ENCODE measurements at regions of chr21 and their contacts with region 1.

Region 1: GRCh38 chr21:41068967-41069642 is 98.9 kb upstream of the BACE2 start:
- DNase-seq: peak; percentile 72
- H3K4me3 ChIP-seq: no peak overlapping the region
- H3K27ac ChIP-seq: no peak overlapping the region
- H3K4me1 ChIP-seq: no peaks in the 10 kb centered on the region
- H3K27me3 ChIP-seq: no peaks in the 10 kb centered on the region
- CTCF ChIP-seq: peak; percentile 81

Region 2: DNA sequence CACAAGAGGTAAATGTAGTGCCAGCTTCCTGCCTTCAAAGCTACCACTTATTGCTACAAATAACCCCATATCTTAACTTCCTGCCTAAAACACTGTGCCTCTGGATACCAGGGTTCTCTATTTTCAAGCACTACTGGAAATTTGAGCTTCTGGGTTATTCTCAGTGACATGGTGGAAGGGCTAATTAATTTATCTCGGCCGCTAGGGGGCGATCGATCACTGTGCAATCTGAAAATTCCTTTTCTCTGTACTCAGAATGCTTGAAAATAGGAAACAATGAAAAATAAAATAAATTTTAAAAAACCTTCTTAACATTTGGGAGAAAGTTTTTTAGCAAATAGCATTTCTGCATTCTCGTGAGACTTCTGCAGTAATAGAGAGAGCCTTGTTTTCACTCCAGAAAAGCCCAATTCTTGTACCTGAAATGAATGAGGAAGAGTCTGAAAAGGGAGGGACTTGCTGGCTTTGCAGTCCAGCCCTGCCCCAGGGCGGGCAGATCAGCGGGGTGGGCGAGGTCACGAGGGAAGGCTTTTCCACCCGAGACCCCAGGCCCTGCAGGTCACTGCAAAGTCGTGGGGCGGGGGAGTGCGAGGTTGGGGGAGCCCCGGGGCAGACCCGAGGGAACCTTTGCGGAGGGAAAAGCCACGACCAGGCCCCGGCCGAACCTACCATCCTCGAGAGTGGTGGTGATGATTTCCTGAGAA is 925.1 kb before region 1 on chr21:
- intact Hi-C with region 1: loop called (anchors 5 kb)
- DNase-seq: peak; percentile 43
- H3K4me3 ChIP-seq: no peak overlapping the region
- H3K27ac ChIP-seq: no peak overlapping the region
- H3K4me1 ChIP-seq: no peaks in the 10 kb centered on the region
- H3K27me3 ChIP-seq: no peaks in the 10 kb centered on the region
- CTCF ChIP-seq: peak; percentile 76

Region 3: GRCh38 chr21:40466893-40467501 is 602.1 kb before region 1 on chr21:
- intact Hi-C with region 1: loop called (anchors 2 kb)
- DNase-seq: no peak
- H3K4me3 ChIP-seq: no peak overlapping the region
- H3K27ac ChIP-seq: no peak overlapping the region
- H3K4me1 ChIP-seq: no peaks in the 10 kb centered on the region
- H3K27me3 ChIP-seq: no peaks in the 10 kb centered on the region
- CTCF ChIP-seq: no peak

Region 4: GRCh38 chr21:40602080-40602479 is 467.0 kb before region 1 on chr21:
- intact Hi-C with region 1: no loop called
- DNase-seq: no peak
- H3K4me3 ChIP-seq: no peak overlapping the region
- H3K27ac ChIP-seq: no peak overlapping the region
- H3K4me1 ChIP-seq: no peaks in the 10 kb centered on the region
- H3K27me3 ChIP-seq: no peaks in the 10 kb centered on the region
- CTCF ChIP-seq: no peak

Region 5: DNA sequence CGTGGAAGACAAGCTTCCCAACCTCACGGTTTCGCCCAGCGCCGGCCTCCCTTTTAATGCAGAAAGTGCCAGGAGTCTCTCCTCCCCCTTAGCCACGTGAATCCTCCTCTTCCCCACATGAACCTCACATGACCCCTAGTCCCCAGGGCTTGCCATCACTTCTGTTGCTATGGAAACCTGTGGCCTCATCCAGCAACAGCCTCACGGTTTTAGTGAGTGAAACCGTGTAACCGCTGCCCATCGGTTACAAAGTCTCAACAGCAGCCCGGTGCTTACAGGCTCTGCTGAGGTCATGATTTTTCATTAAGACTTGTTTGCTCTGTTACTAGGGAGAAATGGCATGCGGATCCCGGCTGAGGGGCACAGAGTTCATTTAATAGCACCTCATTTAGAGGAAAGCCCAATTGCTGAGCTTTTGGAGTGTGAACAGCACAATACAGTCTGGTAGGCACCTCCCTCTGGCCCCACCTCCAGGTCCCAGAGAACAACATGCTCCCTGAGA is 44.3 kb before region 1 on chr21:
- intact Hi-C with region 1: no loop called
- DNase-seq: no peak
- H3K4me3 ChIP-seq: no peak overlapping the region
- H3K27ac ChIP-seq: no peak overlapping the region
- H3K4me1 ChIP-seq: no peaks in the 10 kb centered on the region
- H3K27me3 ChIP-seq: no peaks in the 10 kb centered on the region
- CTCF ChIP-seq: no peak

Region 6: GRCh38 chr21:41170859-41171555 is 101.9 kb after region 1 on chr21:
- intact Hi-C with region 1: no loop called
- DNase-seq: no peak
- H3K4me3 ChIP-seq: no peak overlapping the region
- H3K27ac ChIP-seq: no peak overlapping the region
- H3K4me1 ChIP-seq: no peaks in the 10 kb centered on the region
- H3K27me3 ChIP-seq: no peaks in the 10 kb centered on the region
- CTCF ChIP-seq: no peak

Measured in colonic mucosa (tissue), 4 donors.